Naive thymus-derived CD4-positive, alpha-beta T cell (primary cell): ENCODE measurements at regions of chr5 and their contacts with region 1.

Region 1: DNA sequence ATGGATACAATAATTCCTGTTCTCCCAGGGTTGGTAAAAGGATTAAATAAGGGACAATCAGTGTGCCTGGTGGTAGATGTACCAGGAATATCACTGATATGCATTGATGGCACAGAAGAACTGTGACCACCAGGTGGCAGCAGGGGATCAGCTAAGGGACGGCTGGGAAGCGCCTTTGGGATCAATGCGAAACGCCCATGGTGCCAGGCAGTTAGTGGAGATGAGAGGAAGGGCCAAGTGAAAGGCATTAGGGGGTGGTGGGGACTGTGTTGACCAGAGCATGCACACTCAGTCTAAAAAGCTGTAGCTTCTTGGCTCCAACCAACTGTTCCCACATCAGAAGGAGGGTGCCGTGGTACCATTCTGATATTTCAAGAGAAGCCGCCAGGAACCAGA is 55.6 kb downstream of the ARHGEF37 start:
- DNase-seq: peak in 7 of 9 donors; percentile 24 to 68 (median 43)
- ATAC-seq: peak; percentile 77
- H3K4me3 ChIP-seq: no peak overlapping the region
- H3K4me3 Mint-ChIP-seq: no peak overlapping the region
- H3K27ac ChIP-seq: no peak overlapping the region
- H3K27ac Mint-ChIP-seq: no peak overlapping the region
- H3K4me1 ChIP-seq: no peaks in the 10 kb centered on the region
- H3K4me1 Mint-ChIP-seq: peaks cover 0 to 8% (median 0%) of the 10 kb centered on the region in 7 donors
- H3K27me3 ChIP-seq: no peaks in the 10 kb centered on the region
- H3K27me3 Mint-ChIP-seq: peaks cover 0 to 3% (median 0%) of the 10 kb centered on the region in 5 donors

Region 2: GRCh38 chr5:149990518-149991376 is 353.9 kb after region 1 on chr5:
- CTCF ChIA-PET with region 1: interaction called, 6 read pairs
- POLR2A ChIA-PET with region 1: no interaction called
- intact Hi-C with region 1: loop called (anchors 1 kb)
- DNase-seq: peak; percentile 28 to 65 (median 57)
- ATAC-seq: peak; percentile 98
- H3K4me3 ChIP-seq: no peak overlapping the region
- H3K4me3 Mint-ChIP-seq: no peak overlapping the region
- H3K27ac ChIP-seq: no peak overlapping the region
- H3K27ac Mint-ChIP-seq: no peak overlapping the region
- H3K4me1 ChIP-seq: no peaks in the 10 kb centered on the region
- H3K4me1 Mint-ChIP-seq: no peaks in the 10 kb centered on the region
- H3K27me3 ChIP-seq: no peaks in the 10 kb centered on the region
- H3K27me3 Mint-ChIP-seq: no peaks in the 10 kb centered on the region